Heart right ventricle (tissue), 16 donors: ENCODE measurements at regions of chr3 and their contacts with region 1.

Region 1: GRCh38 chr3:99731499-99731898 is 86.2 kb upstream of the CMSS1 start:
- DNase-seq: no peak
- ATAC-seq: no peak
- H3K4me3 ChIP-seq: no peak overlapping the region
- H3K27ac ChIP-seq: no peak overlapping the region
- H3K4me1 ChIP-seq: peaks cover 0 to 3% (median 0%) of the 10 kb centered on the region in 9 donors
- H3K27me3 ChIP-seq: no peaks in the 10 kb centered on the region
- CTCF ChIP-seq: no peak

Region 2: GRCh38 chr3:99702953-99703352 is 28.5 kb before region 1 on chr3:
- intact Hi-C with region 1: loop called in 1 of 10 experiments (anchors 1 kb)
- DNase-seq: no peak
- ATAC-seq: no peak
- H3K4me3 ChIP-seq: no peak overlapping the region
- H3K27ac ChIP-seq: no peak overlapping the region
- H3K4me1 ChIP-seq: peaks cover 0 to 18% (median 0%) of the 10 kb centered on the region in 9 donors
- H3K27me3 ChIP-seq: no peaks in the 10 kb centered on the region
- CTCF ChIP-seq: no peak

Region 3: DNA sequence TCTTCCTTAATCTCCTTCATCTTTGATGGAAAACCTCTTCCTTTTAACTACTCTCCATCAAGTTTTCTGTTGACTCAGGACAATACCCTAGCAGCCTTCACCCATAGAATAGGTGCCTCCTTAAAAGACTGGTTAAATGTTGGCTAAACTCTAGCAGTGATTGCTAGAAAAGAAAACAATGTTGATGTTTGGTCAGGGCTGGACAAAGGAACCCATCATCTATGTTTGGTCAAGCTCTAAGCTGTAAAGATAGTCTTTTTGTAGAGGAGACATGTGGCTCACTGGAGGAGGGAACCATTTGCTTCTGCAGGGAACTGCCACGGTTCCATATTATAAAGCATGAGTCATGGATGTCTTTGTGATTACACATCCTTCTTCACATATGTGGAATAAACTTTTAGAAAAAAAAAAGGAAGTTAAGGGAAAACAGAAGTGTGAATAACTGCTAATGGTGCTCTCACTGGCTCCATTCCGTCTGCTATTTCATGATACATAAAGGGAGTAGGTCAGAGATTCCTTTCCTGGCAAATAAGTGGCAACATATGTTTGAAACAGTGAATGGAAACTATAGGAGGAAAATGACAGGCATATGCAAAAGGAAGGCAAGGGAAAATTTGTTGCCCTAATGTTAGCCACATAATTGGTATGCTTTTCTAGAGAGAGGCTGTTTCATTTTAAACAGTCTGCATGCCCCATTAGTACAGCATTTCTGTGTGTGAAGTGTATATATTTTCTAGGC is 164.4 kb after region 1 on chr3:
- intact Hi-C with region 1: no loop called
- DNase-seq: no peak
- ATAC-seq: peak in 7 of 8 donors; percentile 21 to 63 (median 48)
- H3K4me3 ChIP-seq: peak overlapping the region in 1 of 10 donors; percentile 12
- H3K27ac ChIP-seq: peak overlapping the region in 1 of 10 donors; percentile 84
- H3K4me1 ChIP-seq: peaks cover 0 to 25% (median 4%) of the 10 kb centered on the region in 9 donors
- H3K27me3 ChIP-seq: no peaks in the 10 kb centered on the region
- CTCF ChIP-seq: no peak

Region 4: GRCh38 chr3:99907959-99908544 is 176.6 kb after region 1 on chr3:
- intact Hi-C with region 1: no loop called
- DNase-seq: no peak
- ATAC-seq: no peak
- H3K4me3 ChIP-seq: no peak overlapping the region
- H3K27ac ChIP-seq: no peak overlapping the region
- H3K4me1 ChIP-seq: peaks cover 0 to 9% (median 0%) of the 10 kb centered on the region in 9 donors
- H3K27me3 ChIP-seq: no peaks in the 10 kb centered on the region
- CTCF ChIP-seq: no peak